ENCODE measurements at regions of chr19 and their contacts with region 1.

Region 1: GRCh38 chr19:27974082-27974513 is 1238.9 kb downstream of the UQCRFS1 start:
- DNase-seq: no peak
- ATAC-seq: no peak
- H3K4me3 ChIP-seq: no peak overlapping the region
- H3K27ac ChIP-seq: no peak overlapping the region
- H3K4me1 ChIP-seq: no peaks in the 10 kb centered on the region
- H3K27me3 ChIP-seq: no peaks in the 10 kb centered on the region
- CTCF ChIP-seq: peak in 2 of 3 experiments; percentile 27 to 32; a peak in 2 of 6 replicates
- POLR2A ChIP-seq: no peak
- RAD21 ChIP-seq: no peak

Region 2: DNA sequence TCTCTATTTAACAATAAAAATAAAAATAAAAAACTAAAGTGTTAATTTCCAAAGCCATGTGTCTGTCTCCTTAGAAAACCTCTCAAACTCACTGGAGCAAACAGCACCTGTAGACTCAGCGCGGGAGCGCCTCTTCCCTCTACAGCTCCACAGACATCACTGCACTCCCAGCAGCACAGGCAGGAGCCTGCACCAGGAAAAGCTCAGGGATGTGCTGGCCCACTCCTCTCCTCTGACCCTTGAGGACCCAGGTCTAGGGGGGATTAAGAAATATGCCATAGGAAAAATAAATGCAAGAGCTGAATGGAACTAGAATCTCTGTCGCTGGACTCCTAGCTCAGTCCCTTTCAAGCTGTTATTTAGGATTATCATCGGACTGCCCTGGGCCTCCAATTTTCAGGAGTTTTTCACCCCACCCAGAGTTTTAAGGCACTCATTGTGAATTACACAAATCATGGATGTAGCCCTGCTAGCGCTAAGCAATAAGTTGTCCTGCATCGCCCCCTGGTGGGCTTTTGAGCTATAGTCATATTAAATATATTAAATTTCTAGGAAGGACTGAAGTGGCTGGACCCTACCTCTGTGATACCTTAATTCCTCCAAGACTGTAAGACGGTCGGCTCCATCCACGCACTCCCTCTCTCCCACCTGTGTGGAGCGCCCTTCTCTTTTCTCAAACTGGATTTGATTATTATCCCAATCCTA is 904.9 kb after region 1 on chr19:
- CTCF ChIA-PET with region 1: no interaction called
- POLR2A ChIA-PET with region 1: no interaction called
- RAD21 ChIA-PET with region 1: no interaction called
- intact Hi-C with region 1: loop called (anchors 2 kb)
- DNase-seq: peak; percentile 21
- ATAC-seq: peak; percentile 61
- H3K4me3 ChIP-seq: no peak overlapping the region
- H3K27ac ChIP-seq: no peak overlapping the region
- H3K4me1 ChIP-seq: no peaks in the 10 kb centered on the region
- H3K27me3 ChIP-seq: no peaks in the 10 kb centered on the region
- CTCF ChIP-seq: peak; percentile 4 to 52 (median 32); a peak in 4 of 6 replicates
- POLR2A ChIP-seq: no peak
- RAD21 ChIP-seq: peak; percentile 42

Measured in HCT116 (cell line).